ENCODE measurements at regions of chrX and their contacts with region 1.

Region 1: GRCh38 chrX:79477691-79478090 is 110.6 kb upstream of the ITM2A start:
- DNase-seq: peak; percentile 23
- H3K4me3 ChIP-seq: no peak overlapping the region
- H3K27ac ChIP-seq: no peak overlapping the region
- H3K4me1 ChIP-seq: no peaks in the 10 kb centered on the region
- H3K27me3 ChIP-seq: no peaks in the 10 kb centered on the region
- CTCF ChIP-seq: peak; percentile 47; the same call in 1 of the 2 replicates

Region 2: GRCh38 chrX:79466636-79467035 is 11.1 kb before region 1 on chrX:
- CTCF ChIA-PET with region 1: no interaction called
- POLR2A ChIA-PET with region 1: no interaction called
- intact Hi-C with region 1: no loop called
- DNase-seq: no peak
- H3K4me3 ChIP-seq: no peak overlapping the region
- H3K27ac ChIP-seq: no peak overlapping the region
- H3K4me1 ChIP-seq: no peaks in the 10 kb centered on the region
- H3K27me3 ChIP-seq: no peaks in the 10 kb centered on the region
- CTCF ChIP-seq: no peak

Region 3: DNA sequence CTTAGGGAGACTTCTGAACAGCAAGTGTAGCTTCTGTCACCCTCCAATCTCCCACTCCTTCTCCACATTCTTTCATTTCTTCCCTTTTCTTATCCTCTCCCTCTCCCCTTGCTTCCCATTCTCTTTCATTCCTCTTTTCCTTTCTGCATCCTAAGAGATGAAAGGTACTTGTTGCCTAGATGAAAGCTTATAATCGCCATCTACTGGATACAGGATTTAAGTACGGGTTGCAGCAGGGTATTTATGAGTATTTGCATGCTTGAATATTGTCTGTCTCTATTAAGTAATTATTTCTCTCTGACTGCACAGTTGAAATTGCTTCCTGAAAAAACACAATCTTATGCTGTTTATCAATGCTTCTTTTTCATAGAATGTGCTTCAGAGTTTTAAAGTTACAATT is 768.6 kb after region 1 on chrX:
- CTCF ChIA-PET with region 1: no interaction called
- POLR2A ChIA-PET with region 1: no interaction called
- intact Hi-C with region 1: loop called (anchors 5 kb)
- DNase-seq: peak; percentile 12
- H3K4me3 ChIP-seq: no peak overlapping the region
- H3K27ac ChIP-seq: no peak overlapping the region
- H3K4me1 ChIP-seq: no peaks in the 10 kb centered on the region
- H3K27me3 ChIP-seq: no peaks in the 10 kb centered on the region
- CTCF ChIP-seq: peak; percentile 26; the same call in 1 of the 2 replicates

Region 4: DNA sequence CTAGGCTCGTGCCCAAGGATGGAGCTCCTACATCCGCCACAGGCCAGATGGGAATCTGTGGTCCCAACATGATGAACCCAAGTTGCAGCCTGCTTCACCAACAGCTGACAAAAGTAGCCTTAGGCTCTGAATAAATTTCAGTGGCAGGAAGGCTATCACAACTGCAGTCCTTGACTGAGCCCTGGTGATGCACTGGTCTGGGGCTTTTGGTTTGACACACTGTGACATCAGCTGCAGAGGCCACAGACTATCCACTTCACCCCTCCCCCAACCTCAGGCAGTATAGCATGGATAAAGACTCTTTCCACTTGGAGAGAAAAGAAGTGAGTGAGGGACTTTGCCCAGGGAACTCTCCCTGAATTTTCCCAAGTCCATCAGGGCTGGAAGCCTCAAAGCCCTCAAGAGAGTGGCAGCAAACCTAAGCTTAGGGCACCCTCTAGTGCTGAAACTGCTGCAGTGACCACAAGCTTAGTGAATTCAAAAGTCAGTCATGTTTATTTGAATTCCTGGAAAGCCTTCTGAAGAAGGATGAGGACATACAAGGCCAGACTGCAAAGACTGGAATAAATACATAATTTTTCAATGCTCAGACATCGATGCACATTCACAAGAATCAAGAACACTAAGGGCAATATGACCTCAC is 807.6 kb after region 1 on chrX:
- CTCF ChIA-PET with region 1: no interaction called
- POLR2A ChIA-PET with region 1: no interaction called
- intact Hi-C with region 1: loop called (anchors 2 kb)
- DNase-seq: peak; percentile 67
- H3K4me3 ChIP-seq: no peak overlapping the region
- H3K27ac ChIP-seq: no peak overlapping the region
- H3K4me1 ChIP-seq: no peaks in the 10 kb centered on the region
- H3K27me3 ChIP-seq: no peaks in the 10 kb centered on the region
- CTCF ChIP-seq: peak; percentile 74